Activated CD8-positive, alpha-beta T cell treated with anti-CD3 and anti-CD28 coated beads for 36 hours (primary cell): ENCODE measurements at regions of chr14 and their contacts with region 1.

Region 1: GRCh38 chr14:33792720-33793368 is 158.0 kb downstream of the EGLN3 start:
- DNase-seq: peak; percentile 76
- ATAC-seq: no peak
- H3K4me3 Mint-ChIP-seq: no peak overlapping the region
- H3K27ac Mint-ChIP-seq: no peak overlapping the region
- H3K4me1 Mint-ChIP-seq: peaks cover 7% of the 10 kb centered on the region
- H3K27me3 Mint-ChIP-seq: peaks cover 20% of the 10 kb centered on the region
- CTCF ChIP-seq: peak; percentile 94

Region 2: DNA sequence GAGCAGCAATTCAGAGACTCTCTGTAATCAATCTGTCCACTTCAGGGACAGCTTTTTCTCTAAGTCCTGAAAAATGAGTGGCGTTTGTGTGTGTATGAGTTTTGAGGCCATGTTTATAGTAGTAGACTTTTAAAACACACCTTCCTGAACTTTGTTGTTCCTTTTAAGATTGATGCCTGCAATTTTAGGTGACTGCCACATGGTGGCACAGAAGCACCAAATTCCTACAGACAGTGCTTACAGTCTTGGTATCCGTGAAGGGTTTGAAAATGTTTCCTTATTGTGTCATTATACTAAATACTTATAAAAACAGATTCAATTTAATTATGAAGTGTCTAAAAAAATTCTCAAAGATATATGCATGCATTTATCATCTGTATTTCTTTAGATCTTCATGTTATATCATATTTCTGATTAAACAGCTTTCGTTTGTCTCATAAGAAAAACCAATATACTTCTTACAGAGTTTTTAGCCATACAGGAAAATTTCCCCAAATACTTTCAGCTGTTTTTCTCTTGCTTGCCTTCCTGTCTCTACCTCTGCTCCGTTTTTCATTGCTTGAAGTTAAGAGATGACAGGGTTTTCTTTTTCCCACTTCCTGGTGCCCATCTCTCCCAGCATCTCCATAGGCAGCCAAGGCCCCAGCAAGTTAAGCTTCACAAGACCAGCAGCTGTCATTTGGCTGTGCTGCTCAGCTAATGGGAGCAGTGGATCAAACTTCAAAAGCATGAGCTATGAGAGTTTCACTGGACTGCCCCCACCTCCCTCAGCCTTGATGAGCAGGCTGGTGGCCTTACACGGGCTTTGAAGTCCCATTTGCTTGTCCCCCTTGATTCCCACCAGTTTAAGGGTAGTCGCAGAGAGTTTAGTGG is 1204.2 kb before region 1 on chr14:
- CTCF ChIA-PET with region 1: interaction called, 20 read pairs
- POLR2A ChIA-PET with region 1: no interaction called
- intact Hi-C with region 1: no loop called
- DNase-seq: no peak
- ATAC-seq: no peak
- H3K4me3 Mint-ChIP-seq: no peak overlapping the region
- H3K27ac Mint-ChIP-seq: no peak overlapping the region
- H3K4me1 Mint-ChIP-seq: no peaks in the 10 kb centered on the region
- H3K27me3 Mint-ChIP-seq: no peaks in the 10 kb centered on the region
- CTCF ChIP-seq: peak; percentile 64

Region 3: GRCh38 chr14:33661101-33661500 is 131.7 kb before region 1 on chr14:
- CTCF ChIA-PET with region 1: no interaction called
- POLR2A ChIA-PET with region 1: no interaction called
- intact Hi-C with region 1: no loop called
- DNase-seq: no peak
- ATAC-seq: no peak
- H3K4me3 Mint-ChIP-seq: no peak overlapping the region
- H3K27ac Mint-ChIP-seq: no peak overlapping the region
- H3K4me1 Mint-ChIP-seq: no peaks in the 10 kb centered on the region
- H3K27me3 Mint-ChIP-seq: no peaks in the 10 kb centered on the region
- CTCF ChIP-seq: no peak

Region 4: GRCh38 chr14:33767586-33768457 is 25.0 kb before region 1 on chr14:
- CTCF ChIA-PET with region 1: interaction called, 13 read pairs
- POLR2A ChIA-PET with region 1: interaction called, 4 read pairs
- intact Hi-C with region 1: no loop called
- DNase-seq: no peak
- ATAC-seq: no peak
- H3K4me3 Mint-ChIP-seq: no peak overlapping the region
- H3K27ac Mint-ChIP-seq: no peak overlapping the region
- H3K4me1 Mint-ChIP-seq: no peaks in the 10 kb centered on the region
- H3K27me3 Mint-ChIP-seq: peaks cover 6% of the 10 kb centered on the region
- CTCF ChIP-seq: no peak

Region 5: DNA sequence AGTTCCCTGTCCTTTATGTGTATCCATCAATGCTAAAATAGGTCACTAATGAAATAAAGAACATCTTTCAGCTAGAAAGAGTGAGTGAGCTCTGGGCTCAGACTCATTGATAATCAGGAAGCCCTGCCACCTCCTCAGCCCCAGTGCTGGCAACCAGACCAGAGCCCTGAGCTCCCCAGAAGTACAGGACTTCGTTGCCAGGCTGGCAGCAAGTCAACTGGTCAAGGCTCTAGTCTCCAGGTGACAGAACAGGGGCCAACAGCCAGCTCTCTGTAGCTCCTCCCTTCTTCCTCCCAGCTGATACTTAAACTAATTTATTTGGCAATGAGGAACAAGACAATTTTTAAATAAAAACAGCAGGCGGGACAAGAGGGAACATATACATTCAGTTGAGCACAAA is 12.7 kb after region 1 on chr14:
- CTCF ChIA-PET with region 1: interaction called, 31 read pairs
- POLR2A ChIA-PET with region 1: interaction called, 4 read pairs
- intact Hi-C with region 1: no loop called
- DNase-seq: no peak
- ATAC-seq: no peak
- H3K4me3 Mint-ChIP-seq: no peak overlapping the region
- H3K27ac Mint-ChIP-seq: no peak overlapping the region
- H3K4me1 Mint-ChIP-seq: peaks cover 2% of the 10 kb centered on the region
- H3K27me3 Mint-ChIP-seq: peaks cover 26% of the 10 kb centered on the region
- CTCF ChIP-seq: no peak

Region 6: GRCh38 chr14:33859306-33859705 is 66.5 kb after region 1 on chr14:
- CTCF ChIA-PET with region 1: no interaction called
- POLR2A ChIA-PET with region 1: no interaction called
- intact Hi-C with region 1: no loop called
- DNase-seq: no peak
- ATAC-seq: no peak
- H3K4me3 Mint-ChIP-seq: no peak overlapping the region
- H3K27ac Mint-ChIP-seq: no peak overlapping the region
- H3K4me1 Mint-ChIP-seq: no peaks in the 10 kb centered on the region
- H3K27me3 Mint-ChIP-seq: no peaks in the 10 kb centered on the region
- CTCF ChIP-seq: no peak